CD4-positive, alpha-beta T cell (primary cell): ENCODE measurements at regions of chr20 and their contacts with region 1.

Region 1: DNA sequence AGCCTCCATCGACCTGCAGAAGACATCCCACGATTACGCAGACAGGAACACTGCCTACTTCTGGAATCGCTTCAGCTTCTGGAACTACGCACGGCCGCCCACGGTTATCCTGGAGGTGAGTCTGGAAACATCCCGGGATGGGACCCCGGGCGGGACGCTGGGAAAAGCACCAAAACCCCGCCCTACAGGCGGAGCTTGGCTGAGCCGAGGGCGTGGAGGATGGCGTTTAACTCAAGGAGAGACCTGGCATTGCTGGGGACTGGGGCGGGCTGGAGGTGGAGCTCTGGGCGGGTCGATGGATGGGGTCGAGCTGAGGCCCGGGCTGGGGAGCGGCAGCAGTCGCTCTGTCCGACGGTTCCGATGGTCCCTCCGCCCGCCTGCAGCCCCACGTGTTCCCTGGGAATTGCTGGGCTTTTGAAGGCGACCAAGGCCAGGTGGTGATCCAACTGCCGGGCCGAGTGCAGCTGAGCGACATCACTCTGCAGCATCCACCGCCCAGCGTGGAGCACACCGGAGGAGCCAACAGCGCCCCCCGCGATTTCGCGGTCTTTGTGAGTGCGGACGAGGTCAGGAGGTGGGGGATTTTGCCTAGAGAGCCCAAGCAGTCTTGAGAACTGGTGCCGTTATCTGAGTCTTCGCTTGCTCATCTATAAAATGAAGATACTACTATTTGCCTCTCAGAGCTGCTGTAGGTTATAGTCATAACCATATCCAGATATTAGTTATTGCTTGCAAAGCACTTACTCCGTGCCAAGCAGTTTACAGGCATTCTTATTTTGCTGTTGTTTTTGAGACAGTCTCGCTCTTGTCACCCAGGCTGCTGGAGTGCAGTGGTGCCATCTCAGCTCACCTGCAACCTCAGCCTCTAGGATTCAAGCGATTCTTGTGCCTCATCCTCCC is 3.8 kb downstream of the SPAG4 start:
- DNase-seq: peak; percentile 50 to 91 (median 68)
- ATAC-seq: peak; percentile 9
- H3K4me3 ChIP-seq: peak overlapping the region; percentile 66
- H3K4me3 Mint-ChIP-seq: peak overlapping the region; percentile 91
- H3K27ac ChIP-seq: peak overlapping the region in 1 of 2 donors; percentile 15
- H3K27ac Mint-ChIP-seq: peak overlapping the region; percentile 94
- H3K4me1 ChIP-seq: peaks cover 45% of the 10 kb centered on the region
- H3K4me1 Mint-ChIP-seq: peaks cover 39% of the 10 kb centered on the region
- H3K27me3 ChIP-seq: no peaks in the 10 kb centered on the region
- H3K27me3 Mint-ChIP-seq: no peaks in the 10 kb centered on the region
- CTCF ChIP-seq: peak; percentile 59

Region 2: GRCh38 chr20:34876162-34877001 is 743.1 kb before region 1 on chr20 and contains the start of gene ACSS2:
- CTCF ChIA-PET with region 1: no interaction called
- POLR2A ChIA-PET with region 1: no interaction called
- intact Hi-C with region 1: loop called in 1 of 2 experiments (anchors 10 kb)
- DNase-seq: peak; percentile 91 to 99 (median 94)
- ATAC-seq: peak; percentile 81
- H3K4me3 ChIP-seq: peak within 1 kb of the TSS; percentile 70
- H3K4me3 Mint-ChIP-seq: peak within 1 kb of the TSS; percentile 90
- H3K27ac ChIP-seq: peak within 1 kb of the TSS; percentile 11 to 42
- H3K27ac Mint-ChIP-seq: peak within 1 kb of the TSS; percentile 81
- H3K4me1 ChIP-seq: peaks cover 51% of the 10 kb centered on the region
- H3K4me1 Mint-ChIP-seq: peaks cover 66% of the 10 kb centered on the region
- H3K27me3 ChIP-seq: no peaks in the 10 kb centered on the region
- H3K27me3 Mint-ChIP-seq: no peaks in the 10 kb centered on the region
- CTCF ChIP-seq: no peak
- total RNA-seq, gene ACSS2: 15.6 to 18.8 TPM

Region 3: GRCh38 chr20:35490736-35491181 is 128.7 kb before region 1 on chr20:
- CTCF ChIA-PET with region 1: interaction called, 3 read pairs
- POLR2A ChIA-PET with region 1: interaction called, 13 read pairs
- intact Hi-C with region 1: no loop called
- DNase-seq: peak; percentile 41 to 89 (median 59)
- ATAC-seq: peak; percentile 99
- H3K4me3 ChIP-seq: peak overlapping the region; percentile 94
- H3K4me3 Mint-ChIP-seq: peak overlapping the region; percentile 100
- H3K27ac ChIP-seq: peak overlapping the region; percentile 63 to 87
- H3K27ac Mint-ChIP-seq: peak overlapping the region; percentile 98
- H3K4me1 ChIP-seq: peaks cover 59% of the 10 kb centered on the region
- H3K4me1 Mint-ChIP-seq: peaks cover 72% of the 10 kb centered on the region
- H3K27me3 ChIP-seq: no peaks in the 10 kb centered on the region
- H3K27me3 Mint-ChIP-seq: no peaks in the 10 kb centered on the region
- CTCF ChIP-seq: no peak

Region 4: GRCh38 chr20:35561268-35561667 is 58.2 kb before region 1 on chr20:
- CTCF ChIA-PET with region 1: no interaction called
- POLR2A ChIA-PET with region 1: no interaction called
- intact Hi-C with region 1: no loop called
- DNase-seq: peak in 8 of 14 experiments; percentile 4 to 51 (median 23)
- ATAC-seq: peak; percentile 58
- H3K4me3 ChIP-seq: no peak overlapping the region
- H3K4me3 Mint-ChIP-seq: no peak overlapping the region
- H3K27ac ChIP-seq: no peak overlapping the region
- H3K27ac Mint-ChIP-seq: no peak overlapping the region
- H3K4me1 ChIP-seq: no peaks in the 10 kb centered on the region
- H3K4me1 Mint-ChIP-seq: no peaks in the 10 kb centered on the region
- H3K27me3 ChIP-seq: no peaks in the 10 kb centered on the region
- H3K27me3 Mint-ChIP-seq: no peaks in the 10 kb centered on the region
- CTCF ChIP-seq: no peak

Region 5: GRCh38 chr20:35601008-35601973 is 18.2 kb before region 1 on chr20:
- CTCF ChIA-PET with region 1: interaction called, 27 read pairs
- POLR2A ChIA-PET with region 1: interaction called, 36 read pairs
- intact Hi-C with region 1: loop called in 1 of 2 experiments (anchors 2 kb)
- DNase-seq: peak; percentile 65 to 92 (median 76)
- ATAC-seq: peak; percentile 95
- H3K4me3 ChIP-seq: peak overlapping the region; percentile 58
- H3K4me3 Mint-ChIP-seq: peak overlapping the region; percentile 77
- H3K27ac ChIP-seq: no peak overlapping the region
- H3K27ac Mint-ChIP-seq: no peak overlapping the region
- H3K4me1 ChIP-seq: peaks cover 19% of the 10 kb centered on the region
- H3K4me1 Mint-ChIP-seq: peaks cover 14% of the 10 kb centered on the region
- H3K27me3 ChIP-seq: peaks cover 9 to 15% of the 10 kb centered on the region in 2 experiments
- H3K27me3 Mint-ChIP-seq: peaks cover 22% of the 10 kb centered on the region
- CTCF ChIP-seq: peak; percentile 64

Region 6: DNA sequence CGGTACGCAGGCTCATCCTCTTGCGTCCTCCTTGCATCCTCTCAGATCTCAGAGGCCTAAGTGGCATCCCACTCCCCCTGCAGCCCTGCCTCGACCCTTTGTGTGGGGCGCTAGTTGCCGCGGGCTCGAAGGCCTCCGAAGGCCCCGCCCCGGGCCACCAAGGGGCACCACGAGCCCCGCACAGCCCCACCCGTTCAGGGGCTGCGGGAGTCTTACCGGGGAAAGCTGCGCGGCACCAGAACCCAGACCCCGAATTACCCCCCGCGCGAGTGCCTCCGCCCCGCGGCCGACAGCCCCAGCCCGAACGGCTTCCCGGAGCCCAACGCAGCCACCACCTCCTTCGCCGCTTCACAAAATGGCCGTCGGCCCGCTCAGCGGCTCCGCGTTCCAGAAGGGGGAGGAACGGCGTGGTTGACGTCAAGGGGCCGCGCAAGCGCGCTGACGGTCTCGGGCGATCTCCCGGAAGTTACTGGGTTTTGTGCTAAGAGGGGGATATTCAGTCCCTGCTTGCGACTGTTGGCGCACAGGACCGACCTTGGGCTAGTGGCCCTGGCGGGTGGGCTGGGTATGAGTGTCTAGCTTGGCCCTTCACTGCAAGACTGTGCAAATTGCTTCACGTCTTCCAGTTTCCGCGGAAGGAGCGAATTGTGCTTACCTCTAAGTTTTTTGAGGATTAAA is 45.2 kb after region 1 on chr20 and contains the starts of genes CPNE1 and RBM12:
- CTCF ChIA-PET with region 1: interaction called, 57 read pairs
- POLR2A ChIA-PET with region 1: interaction called, 147 read pairs
- intact Hi-C with region 1: loop called (anchors 1 kb)
- DNase-seq: peak; percentile 87 to 97 (median 92)
- ATAC-seq: peak; percentile 67
- H3K4me3 ChIP-seq: peak within 1 kb of the TSS; percentile 97
- H3K4me3 Mint-ChIP-seq: peak within 1 kb of the TSS; percentile 89
- H3K27ac ChIP-seq: peak within 1 kb of the TSS; percentile 99
- H3K27ac Mint-ChIP-seq: peak within 1 kb of the TSS; percentile 99
- H3K4me1 ChIP-seq: peaks cover 37% of the 10 kb centered on the region
- H3K4me1 Mint-ChIP-seq: peaks cover 49% of the 10 kb centered on the region
- H3K27me3 ChIP-seq: no peaks in the 10 kb centered on the region
- H3K27me3 Mint-ChIP-seq: no peaks in the 10 kb centered on the region
- CTCF ChIP-seq: no peak
- total RNA-seq, gene CPNE1: 146 to 153 TPM
- total RNA-seq, gene RBM12: 91.7 to 95.2 TPM

Region 7: GRCh38 chr20:35726759-35727711 is 107.6 kb after region 1 on chr20:
- CTCF ChIA-PET with region 1: no interaction called
- POLR2A ChIA-PET with region 1: interaction called, 4 read pairs
- intact Hi-C with region 1: loop called in 1 of 2 experiments (anchors 5 kb)
- DNase-seq: no peak
- ATAC-seq: no peak
- H3K4me3 ChIP-seq: no peak overlapping the region
- H3K4me3 Mint-ChIP-seq: no peak overlapping the region
- H3K27ac ChIP-seq: no peak overlapping the region
- H3K27ac Mint-ChIP-seq: peak overlapping the region; percentile 20
- H3K4me1 ChIP-seq: peaks cover 26% of the 10 kb centered on the region
- H3K4me1 Mint-ChIP-seq: peaks cover 46% of the 10 kb centered on the region
- H3K27me3 ChIP-seq: no peaks in the 10 kb centered on the region
- H3K27me3 Mint-ChIP-seq: no peaks in the 10 kb centered on the region
- CTCF ChIP-seq: no peak